ENCODE measurements at regions of chrX and their contacts with region 1.

Region 1: DNA sequence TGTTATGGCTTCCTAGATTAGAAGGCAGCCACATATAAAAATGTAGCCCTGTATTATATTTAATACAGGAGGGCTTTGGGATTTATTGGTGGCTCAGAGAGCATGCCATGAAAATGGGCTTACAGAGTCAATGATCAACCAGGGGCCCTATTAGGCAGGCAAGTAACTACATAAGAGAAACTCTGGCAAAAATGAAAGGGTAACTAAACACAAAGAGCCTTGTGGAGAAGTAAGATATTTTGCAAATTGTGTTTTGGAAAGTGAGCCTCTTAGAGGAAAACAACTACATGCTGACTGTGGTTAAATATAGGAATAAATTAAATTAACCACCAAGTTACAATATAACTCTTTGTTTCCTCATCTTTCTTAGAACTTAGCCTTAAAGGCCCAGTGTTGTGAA is 5.5 kb downstream of the SAT1 start:
- DNase-seq: no peak
- ATAC-seq: no peak
- H3K4me3 ChIP-seq: no peak overlapping the region
- H3K27ac ChIP-seq: peak overlapping the region; percentile 53
- H3K4me1 ChIP-seq: peaks cover 20 to 45% of the 10 kb centered on the region in 2 experiments
- H3K27me3 ChIP-seq: no peaks in the 10 kb centered on the region
- CTCF ChIP-seq: no peak
- POLR2A ChIP-seq: no peak
- RAD21 ChIP-seq: no peak

Region 2: DNA sequence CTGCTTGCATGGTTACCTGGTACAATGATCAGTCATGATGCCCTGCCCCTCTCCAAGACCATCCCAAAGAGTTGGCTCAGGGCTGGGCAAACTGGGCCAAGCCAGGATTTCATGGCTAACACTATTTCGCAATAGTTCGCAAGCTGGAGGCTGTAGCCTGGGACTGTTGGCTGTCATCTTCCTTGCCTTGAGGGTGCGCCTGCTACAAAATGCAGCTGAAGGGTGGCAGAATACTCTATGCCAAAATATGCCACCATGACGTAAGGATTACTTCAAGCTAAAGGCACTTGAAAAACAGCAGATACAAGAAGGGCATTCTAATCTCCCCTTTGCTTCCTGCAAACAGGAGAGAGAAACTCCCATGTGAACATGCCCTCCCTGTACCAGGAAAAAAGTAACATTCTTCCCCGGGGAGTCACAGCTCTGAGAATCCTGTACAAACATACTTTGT is 15.4 kb after region 1 on chrX:
- CTCF ChIA-PET with region 1: no interaction called
- POLR2A ChIA-PET with region 1: interaction called, 25 read pairs
- RAD21 ChIA-PET with region 1: interaction called in 1 of 2 experiments, 6 read pairs
- intact Hi-C with region 1: loop called (anchors 2 kb)
- DNase-seq: no peak
- ATAC-seq: no peak
- H3K4me3 ChIP-seq: no peak overlapping the region
- H3K27ac ChIP-seq: peak overlapping the region; percentile 61
- H3K4me1 ChIP-seq: peaks cover 45 to 52% of the 10 kb centered on the region in 2 experiments
- H3K27me3 ChIP-seq: no peaks in the 10 kb centered on the region
- CTCF ChIP-seq: no peak
- POLR2A ChIP-seq: no peak
- RAD21 ChIP-seq: no peak

Region 3: DNA sequence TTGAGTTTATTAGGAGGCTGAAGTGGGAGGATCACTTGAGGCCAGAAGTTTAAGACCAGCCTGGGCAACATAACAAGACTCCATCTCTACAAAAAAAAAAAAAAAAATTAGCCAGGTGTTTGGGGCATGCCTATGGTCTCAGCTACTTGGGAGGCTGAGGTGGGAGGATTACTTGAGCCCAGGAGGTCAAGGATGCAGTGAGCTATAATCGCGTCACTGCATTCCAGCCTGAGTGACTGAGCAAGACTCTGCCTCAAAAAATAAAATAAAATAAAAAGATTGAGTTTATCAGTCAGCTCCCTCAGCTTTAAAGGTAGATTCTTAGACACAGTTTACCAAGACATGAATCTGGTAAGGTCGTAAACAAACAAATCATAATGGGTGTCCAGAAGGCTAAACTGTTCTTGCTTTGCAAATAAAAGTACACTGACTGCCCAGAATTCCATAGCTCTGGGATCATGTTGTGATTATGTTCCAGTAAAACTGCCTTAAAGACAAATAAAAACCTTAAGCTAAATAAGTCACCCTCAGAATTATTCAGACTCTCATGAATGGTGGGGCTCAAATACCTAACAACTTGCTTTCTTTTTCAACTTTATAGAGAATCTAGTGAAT is 100.5 kb after region 1 on chrX:
- CTCF ChIA-PET with region 1: no interaction called
- POLR2A ChIA-PET with region 1: interaction called, 14 read pairs
- RAD21 ChIA-PET with region 1: interaction called in 1 of 2 experiments, 4 read pairs
- intact Hi-C with region 1: no loop called
- DNase-seq: no peak
- ATAC-seq: peak; percentile 50
- H3K4me3 ChIP-seq: peak overlapping the region in 1 of 2 experiments; percentile 26; a peak in 1 of 4 replicates
- H3K27ac ChIP-seq: peak overlapping the region; percentile 75
- H3K4me1 ChIP-seq: peaks cover 52 to 67% of the 10 kb centered on the region in 2 experiments
- H3K27me3 ChIP-seq: no peaks in the 10 kb centered on the region
- CTCF ChIP-seq: no peak
- POLR2A ChIP-seq: no peak
- RAD21 ChIP-seq: no peak

Measured in HCT116 (cell line).